Activated B cell treated with CpG ODN at 0.5 μM for 24 hours (primary cell): ENCODE measurements at regions of chr22 and their contacts with region 1.

Region 1: GRCh38 chr22:31585161-31585859 is 76.7 kb downstream of the PISD start:
- DNase-seq: no peak
- ATAC-seq: no peak
- H3K4me3 Mint-ChIP-seq: no peak overlapping the region
- H3K27ac Mint-ChIP-seq: no peak overlapping the region
- H3K4me1 Mint-ChIP-seq: peaks cover 19% of the 10 kb centered on the region
- H3K27me3 Mint-ChIP-seq: no peaks in the 10 kb centered on the region
- CTCF ChIP-seq: no peak

Region 2: GRCh38 chr22:30340911-30341685 is 1244.2 kb before region 1 on chr22:
- CTCF ChIA-PET with region 1: no interaction called
- POLR2A ChIA-PET with region 1: no interaction called
- intact Hi-C with region 1: no loop called
- DNase-seq: no peak
- ATAC-seq: no peak
- H3K4me3 Mint-ChIP-seq: no peak overlapping the region
- H3K27ac Mint-ChIP-seq: no peak overlapping the region
- H3K4me1 Mint-ChIP-seq: no peaks in the 10 kb centered on the region
- H3K27me3 Mint-ChIP-seq: no peaks in the 10 kb centered on the region
- CTCF ChIP-seq: no peak

Region 3: DNA sequence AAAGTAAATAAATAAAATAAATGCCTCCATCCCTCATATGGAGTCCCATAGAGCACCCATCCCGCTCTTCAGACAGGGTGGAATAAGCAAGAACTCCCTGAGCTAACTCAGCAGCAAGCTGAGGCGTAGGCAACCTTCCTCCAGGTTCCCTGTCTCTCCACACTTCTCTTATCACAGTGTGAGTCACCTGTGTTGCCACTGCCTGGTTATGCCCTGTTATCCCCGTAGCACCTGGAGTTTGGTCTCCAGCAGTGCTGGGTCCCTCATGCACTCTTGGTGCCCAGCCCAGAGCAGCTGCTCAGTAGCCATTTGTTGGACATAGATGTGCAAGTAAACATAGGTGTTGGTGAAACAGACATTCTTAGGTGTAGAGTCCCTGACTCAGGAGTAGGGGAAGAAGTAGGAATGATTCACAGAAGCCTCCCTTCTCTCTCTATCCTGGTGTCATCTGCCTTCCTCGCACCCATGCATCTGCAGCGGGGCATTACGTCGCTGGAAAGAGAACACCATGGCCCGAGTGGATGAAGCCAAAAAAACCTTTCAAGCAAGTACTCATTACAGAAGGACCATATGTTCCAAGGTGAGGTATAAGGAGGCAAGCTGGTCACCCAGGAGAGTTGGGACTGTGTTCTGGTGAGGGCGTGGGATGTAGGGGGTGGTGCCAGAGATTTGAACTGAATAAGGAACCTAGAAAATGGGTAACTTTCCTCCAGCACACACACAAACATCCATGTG is 20.7 kb after region 1 on chr22:
- CTCF ChIA-PET with region 1: no interaction called
- POLR2A ChIA-PET with region 1: no interaction called
- intact Hi-C with region 1: no loop called
- DNase-seq: no peak
- ATAC-seq: no peak
- H3K4me3 Mint-ChIP-seq: no peak overlapping the region
- H3K27ac Mint-ChIP-seq: no peak overlapping the region
- H3K4me1 Mint-ChIP-seq: no peaks in the 10 kb centered on the region
- H3K27me3 Mint-ChIP-seq: no peaks in the 10 kb centered on the region
- CTCF ChIP-seq: no peak

Region 4: GRCh38 chr22:31616315-31617001 is 31.1 kb after region 1 on chr22:
- CTCF ChIA-PET with region 1: no interaction called
- POLR2A ChIA-PET with region 1: interaction called, 4 read pairs
- intact Hi-C with region 1: loop called (anchors 5 kb)
- DNase-seq: no peak
- ATAC-seq: peak; percentile 96
- H3K4me3 Mint-ChIP-seq: no peak overlapping the region
- H3K27ac Mint-ChIP-seq: peak overlapping the region; percentile 69
- H3K4me1 Mint-ChIP-seq: peaks cover 33% of the 10 kb centered on the region
- H3K27me3 Mint-ChIP-seq: no peaks in the 10 kb centered on the region
- CTCF ChIP-seq: no peak